ENCODE measurements at regions of chr22 and their contacts with region 1.

Region 1: DNA sequence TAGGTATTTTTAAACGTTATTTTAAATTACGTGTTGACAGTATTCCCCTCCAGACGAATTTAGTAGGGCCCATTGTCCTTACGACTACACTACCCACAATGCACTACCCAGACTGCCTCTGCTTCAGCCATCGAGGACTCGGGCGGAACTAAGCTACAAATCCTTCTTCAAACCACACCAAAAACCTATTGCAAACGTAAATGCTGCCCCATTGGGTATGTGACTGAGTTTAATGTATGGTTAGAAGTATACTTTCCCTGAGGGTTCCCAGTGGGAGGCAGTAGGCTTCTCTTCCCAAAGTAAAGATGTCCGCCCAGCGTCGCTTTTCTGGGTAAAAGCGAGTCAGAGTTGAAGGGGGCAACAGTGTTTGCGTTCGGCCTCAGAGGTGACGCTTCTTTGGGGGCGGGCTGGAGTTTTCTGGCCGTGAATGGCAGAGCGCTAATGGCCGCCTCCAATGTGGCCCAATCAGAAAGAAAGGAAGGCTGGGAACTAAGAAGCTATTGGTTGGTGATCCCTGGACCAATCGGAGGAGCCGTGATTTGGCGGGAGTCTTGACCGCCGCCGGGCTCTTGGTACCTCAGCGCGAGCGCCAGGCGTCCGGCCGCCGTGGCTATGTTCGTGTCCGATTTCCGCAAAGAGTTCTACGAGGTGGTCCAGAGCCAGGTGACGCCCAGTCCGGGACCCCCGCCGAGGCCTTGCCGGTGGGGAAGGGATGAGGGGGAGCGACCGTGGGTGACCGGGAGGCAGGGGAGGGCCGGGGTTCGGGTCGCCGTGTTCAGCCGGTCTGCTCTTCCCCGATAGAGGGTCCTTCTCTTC is at the start of gene CDC45:
- DNase-seq: peak; percentile 86 to 98 (median 94)
- ATAC-seq: peak; percentile 92
- H3K4me3 ChIP-seq: peak within 1 kb of the TSS; percentile 69 to 80
- H3K4me3 Mint-ChIP-seq: peak within 1 kb of the TSS; percentile 96
- H3K27ac ChIP-seq: peak within 1 kb of the TSS; percentile 97
- H3K27ac Mint-ChIP-seq: peak within 1 kb of the TSS; percentile 98
- H3K4me1 ChIP-seq: peaks cover 15% of the 10 kb centered on the region
- H3K4me1 Mint-ChIP-seq: peaks cover 36% of the 10 kb centered on the region
- H3K27me3 ChIP-seq: no peaks in the 10 kb centered on the region
- H3K27me3 Mint-ChIP-seq: no peaks in the 10 kb centered on the region
- CTCF ChIP-seq: no peak
- total RNA-seq, gene CDC45: 1.8 to 2.3 TPM

Region 2: DNA sequence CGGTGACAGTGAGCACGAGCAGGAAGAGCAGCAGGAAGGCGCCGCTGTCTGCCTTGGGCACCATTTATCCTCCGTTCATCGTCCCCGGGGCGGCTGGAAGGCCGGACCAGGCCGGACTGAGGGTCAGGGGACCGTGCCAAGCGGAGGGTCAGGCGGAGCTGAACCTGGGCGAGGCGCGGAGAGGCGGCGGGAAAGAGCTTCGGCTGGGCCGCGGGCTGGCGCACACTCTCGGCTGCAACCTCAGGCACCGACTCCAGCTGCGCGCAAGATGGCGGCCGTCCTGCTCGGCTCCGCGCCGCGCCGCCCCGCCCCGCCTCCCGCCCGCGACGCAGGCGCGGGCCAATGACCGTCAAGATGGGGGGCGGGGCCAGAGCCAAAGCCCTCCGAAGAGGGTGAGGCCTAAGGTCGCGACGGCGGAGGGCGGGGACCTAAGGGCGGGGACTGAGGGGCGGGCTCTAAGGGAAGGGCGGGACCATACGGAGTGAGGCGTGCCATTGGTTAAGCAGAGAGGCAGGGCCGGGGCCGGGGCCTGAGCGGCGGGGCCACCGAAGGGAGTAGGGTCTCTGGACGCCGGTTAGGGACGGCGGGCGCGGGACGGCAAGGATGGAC is 357.3 kb before region 1 on chr22 and contains the start of gene DGCR2:
- CTCF ChIA-PET with region 1: no interaction called
- POLR2A ChIA-PET with region 1: interaction called, 3 read pairs
- intact Hi-C with region 1: loop called (anchors 1 kb)
- DNase-seq: peak; percentile 93 to 98 (median 97)
- ATAC-seq: peak; percentile 98
- H3K4me3 ChIP-seq: peak within 1 kb of the TSS; percentile 73 to 78
- H3K4me3 Mint-ChIP-seq: peak within 1 kb of the TSS; percentile 89
- H3K27ac ChIP-seq: peak within 1 kb of the TSS; percentile 75 to 88
- H3K27ac Mint-ChIP-seq: peak within 1 kb of the TSS; percentile 90
- H3K4me1 ChIP-seq: peaks cover 49% of the 10 kb centered on the region
- H3K4me1 Mint-ChIP-seq: peaks cover 47% of the 10 kb centered on the region
- H3K27me3 ChIP-seq: no peaks in the 10 kb centered on the region
- H3K27me3 Mint-ChIP-seq: no peaks in the 10 kb centered on the region
- CTCF ChIP-seq: no peak
- total RNA-seq, gene DGCR2: 29.6 to 32.4 TPM

Region 3: GRCh38 chr22:19178656-19179496 is 300.7 kb before region 1 on chr22 and contains the start of gene SLC25A1:
- CTCF ChIA-PET with region 1: interaction called, 4 read pairs
- POLR2A ChIA-PET with region 1: interaction called, 3 read pairs
- intact Hi-C with region 1: loop called in 1 of 2 experiments (anchors 2 kb)
- DNase-seq: peak in 8 of 9 experiments; percentile 54 to 87 (median 78)
- ATAC-seq: peak; percentile 67
- H3K4me3 ChIP-seq: peak within 1 kb of the TSS; percentile 68 to 74
- H3K4me3 Mint-ChIP-seq: peak within 1 kb of the TSS; percentile 84
- H3K27ac ChIP-seq: peak within 1 kb of the TSS; percentile 42 to 65
- H3K27ac Mint-ChIP-seq: peak within 1 kb of the TSS; percentile 84
- H3K4me1 ChIP-seq: peaks cover 24% of the 10 kb centered on the region
- H3K4me1 Mint-ChIP-seq: peaks cover 22% of the 10 kb centered on the region
- H3K27me3 ChIP-seq: no peaks in the 10 kb centered on the region
- H3K27me3 Mint-ChIP-seq: no peaks in the 10 kb centered on the region
- CTCF ChIP-seq: no peak
- total RNA-seq, gene SLC25A1: 14.5 to 15.9 TPM

Region 4: DNA sequence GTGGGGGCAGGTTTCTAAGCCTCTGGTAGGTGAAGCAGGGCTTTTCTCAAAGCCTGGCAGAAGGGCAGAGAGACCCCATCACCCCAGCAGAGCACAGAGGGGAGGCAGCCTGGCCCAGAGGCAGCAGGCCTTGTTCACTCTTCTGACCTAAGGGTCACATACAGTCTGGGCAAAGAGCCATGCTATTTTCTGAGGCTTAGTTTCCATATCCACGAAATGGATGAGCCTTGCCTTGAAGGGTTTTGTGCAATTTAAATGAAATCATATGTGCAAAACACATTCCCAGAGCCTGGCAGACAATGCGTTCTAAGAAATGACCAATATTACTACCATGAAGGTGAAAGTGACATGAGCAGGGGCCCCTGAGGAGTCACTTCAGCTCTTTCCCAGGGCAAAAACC is 92.5 kb before region 1 on chr22:
- CTCF ChIA-PET with region 1: interaction called, 3 read pairs
- POLR2A ChIA-PET with region 1: interaction called, 4 read pairs
- intact Hi-C with region 1: loop called in 1 of 2 experiments (anchors 1 kb)
- DNase-seq: no peak
- ATAC-seq: no peak
- H3K4me3 ChIP-seq: no peak overlapping the region
- H3K4me3 Mint-ChIP-seq: no peak overlapping the region
- H3K27ac ChIP-seq: no peak overlapping the region
- H3K27ac Mint-ChIP-seq: no peak overlapping the region
- H3K4me1 ChIP-seq: no peaks in the 10 kb centered on the region
- H3K4me1 Mint-ChIP-seq: no peaks in the 10 kb centered on the region
- H3K27me3 ChIP-seq: no peaks in the 10 kb centered on the region
- H3K27me3 Mint-ChIP-seq: no peaks in the 10 kb centered on the region
- CTCF ChIP-seq: no peak

Region 5: GRCh38 chr22:19447388-19448075 is 32.0 kb before region 1 on chr22 and contains the start of gene C22orf39:
- CTCF ChIA-PET with region 1: interaction called, 5 read pairs
- POLR2A ChIA-PET with region 1: interaction called, 9 read pairs
- intact Hi-C with region 1: loop called (anchors 1 kb)
- DNase-seq: peak; percentile 72 to 95 (median 87)
- ATAC-seq: peak; percentile 90
- H3K4me3 ChIP-seq: peak within 1 kb of the TSS; percentile 78 to 93
- H3K4me3 Mint-ChIP-seq: peak within 1 kb of the TSS; percentile 92
- H3K27ac ChIP-seq: peak within 1 kb of the TSS; percentile 85 to 92
- H3K27ac Mint-ChIP-seq: peak within 1 kb of the TSS; percentile 93
- H3K4me1 ChIP-seq: peaks cover 27% of the 10 kb centered on the region
- H3K4me1 Mint-ChIP-seq: peaks cover 42% of the 10 kb centered on the region
- H3K27me3 ChIP-seq: no peaks in the 10 kb centered on the region
- H3K27me3 Mint-ChIP-seq: no peaks in the 10 kb centered on the region
- CTCF ChIP-seq: no peak
- total RNA-seq, gene C22orf39: 31.0 to 34.1 TPM

Region 6: DNA sequence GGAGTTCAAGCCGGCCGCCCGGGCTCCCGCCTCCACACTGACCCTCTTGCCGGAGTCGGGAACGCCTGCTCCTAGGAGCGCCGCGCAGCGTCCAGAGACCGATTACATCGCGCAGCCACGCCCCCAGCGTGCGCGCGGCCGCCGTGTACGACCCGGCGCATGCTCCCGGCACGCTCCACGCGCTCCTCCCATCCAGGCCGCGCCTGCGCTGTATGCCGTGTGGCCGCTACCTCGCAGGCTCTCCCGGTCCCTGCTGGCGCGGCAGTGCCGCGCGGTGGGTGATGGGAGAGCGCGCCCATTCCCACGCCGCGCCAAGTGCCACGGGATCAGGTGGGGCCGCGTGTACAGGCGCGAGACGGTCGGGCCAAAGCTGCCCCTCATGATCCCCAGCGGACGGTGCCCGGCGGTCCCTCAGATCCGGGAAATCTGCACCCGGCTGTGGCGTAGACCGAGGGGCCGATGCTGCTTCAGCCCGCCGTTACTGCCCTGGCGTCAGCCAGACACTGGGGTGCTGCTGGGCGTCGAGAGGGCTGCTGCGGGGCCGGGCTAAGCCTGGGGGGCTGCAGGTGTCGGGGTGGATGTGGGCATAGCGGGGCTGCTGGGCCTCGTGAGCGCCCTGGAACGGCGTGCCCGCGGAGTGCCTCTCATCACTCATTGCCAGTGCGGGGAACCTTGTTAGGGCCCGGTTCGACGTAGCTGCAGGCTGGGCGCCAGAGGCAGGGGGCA is 375.4 kb after region 1 on chr22 and contains the starts of genes GNB1L and RTL10:
- CTCF ChIA-PET with region 1: no interaction called
- POLR2A ChIA-PET with region 1: no interaction called
- intact Hi-C with region 1: loop called in 1 of 2 experiments (anchors 10 kb)
- DNase-seq: peak; percentile 87 to 99 (median 96)
- ATAC-seq: peak; percentile 91
- H3K4me3 ChIP-seq: peak within 1 kb of the TSS; percentile 97 to 99
- H3K4me3 Mint-ChIP-seq: peak within 1 kb of the TSS; percentile 93
- H3K27ac ChIP-seq: peak within 1 kb of the TSS; percentile 83 to 85
- H3K27ac Mint-ChIP-seq: peak within 1 kb of the TSS; percentile 98
- H3K4me1 ChIP-seq: peaks cover 37% of the 10 kb centered on the region
- H3K4me1 Mint-ChIP-seq: peaks cover 63% of the 10 kb centered on the region
- H3K27me3 ChIP-seq: no peaks in the 10 kb centered on the region
- H3K27me3 Mint-ChIP-seq: no peaks in the 10 kb centered on the region
- CTCF ChIP-seq: no peak
- total RNA-seq, gene GNB1L: 5.8 to 6.9 TPM
- total RNA-seq, gene RTL10: 21.5 to 22.9 TPM

Region 7: GRCh38 chr22:20916983-20917810 is 1437.6 kb after region 1 on chr22 and contains the start of gene CRKL:
- CTCF ChIA-PET with region 1: no interaction called
- POLR2A ChIA-PET with region 1: no interaction called
- intact Hi-C with region 1: loop called in 1 of 2 experiments (anchors 5 kb)
- DNase-seq: peak; percentile 89 to 99 (median 96)
- ATAC-seq: peak; percentile 94
- H3K4me3 ChIP-seq: peak within 1 kb of the TSS; percentile 96 to 99
- H3K4me3 Mint-ChIP-seq: peak within 1 kb of the TSS; percentile 97
- H3K27ac ChIP-seq: peak within 1 kb of the TSS; percentile 83 to 90
- H3K27ac Mint-ChIP-seq: peak within 1 kb of the TSS; percentile 95
- H3K4me1 ChIP-seq: peaks cover 34% of the 10 kb centered on the region
- H3K4me1 Mint-ChIP-seq: peaks cover 36% of the 10 kb centered on the region
- H3K27me3 ChIP-seq: no peaks in the 10 kb centered on the region
- H3K27me3 Mint-ChIP-seq: no peaks in the 10 kb centered on the region
- CTCF ChIP-seq: peak; percentile 88
- total RNA-seq, gene CRKL: 57.7 to 60.2 TPM

Measured in CD8-positive, alpha-beta T cell (primary cell).